HepG2 (cell line): ENCODE measurements at regions of chr17 and their contacts with region 1.

Region 1: GRCh38 chr17:72120642-72121163 is at the start of gene SOX9:
- DNase-seq: peak; percentile 98
- ATAC-seq: peak; percentile 90
- H3K4me3 ChIP-seq: peak within 1 kb of the TSS; percentile 86 to 100 (median 99)
- H3K27ac ChIP-seq: peak within 1 kb of the TSS; percentile 79
- H3K4me1 ChIP-seq: peaks cover 45% of the 10 kb centered on the region
- H3K27me3 ChIP-seq: no peaks in the 10 kb centered on the region; a peak in 1 of 5 replicates
- CTCF ChIP-seq: no peak
- EP300 ChIP-seq: no peak
- POLR2A ChIP-seq: peak; percentile 96 to 99
- RAD21 ChIP-seq: no peak; the same call in none of the 2 replicates
- total RNA-seq, gene SOX9: 27.6 and 40.1 TPM in 2 replicates

Region 2: GRCh38 chr17:71472809-71473789 is 647.6 kb before region 1 on chr17:
- CTCF ChIA-PET with region 1: interaction called, 15 read pairs
- POLR2A ChIA-PET with region 1: interaction called, 17 read pairs
- in situ Hi-C with region 1: loop called (anchors 5 kb)
- intact Hi-C with region 1: loop called (anchors 1 kb)
- DNase-seq: peak; percentile 65
- ATAC-seq: peak; percentile 93
- H3K4me3 ChIP-seq: no peak overlapping the region
- H3K27ac ChIP-seq: no peak overlapping the region
- H3K4me1 ChIP-seq: no peaks in the 10 kb centered on the region
- H3K27me3 ChIP-seq: no peaks in the 10 kb centered on the region
- CTCF ChIP-seq: peak; percentile 80
- EP300 ChIP-seq: no peak
- POLR2A ChIP-seq: no peak
- RAD21 ChIP-seq: peak; percentile 80

Region 3: GRCh38 chr17:72092710-72093322 is 27.9 kb before region 1 on chr17:
- CTCF ChIA-PET with region 1: interaction called, 4 read pairs
- POLR2A ChIA-PET with region 1: interaction called, 43 read pairs
- in situ Hi-C with region 1: no loop called
- intact Hi-C with region 1: loop called (anchors 1 kb)
- DNase-seq: peak; percentile 98
- ATAC-seq: peak; percentile 96
- H3K4me3 ChIP-seq: no peak overlapping the region
- H3K27ac ChIP-seq: peak overlapping the region; percentile 61
- H3K4me1 ChIP-seq: peaks cover 33% of the 10 kb centered on the region
- H3K27me3 ChIP-seq: no peaks in the 10 kb centered on the region
- CTCF ChIP-seq: peak; percentile 74
- EP300 ChIP-seq: peak; percentile 88 to 97; a peak in 3 of 4 replicates
- POLR2A ChIP-seq: no peak
- RAD21 ChIP-seq: peak; percentile 61; the same call in 1 of the 2 replicates

Region 4: DNA sequence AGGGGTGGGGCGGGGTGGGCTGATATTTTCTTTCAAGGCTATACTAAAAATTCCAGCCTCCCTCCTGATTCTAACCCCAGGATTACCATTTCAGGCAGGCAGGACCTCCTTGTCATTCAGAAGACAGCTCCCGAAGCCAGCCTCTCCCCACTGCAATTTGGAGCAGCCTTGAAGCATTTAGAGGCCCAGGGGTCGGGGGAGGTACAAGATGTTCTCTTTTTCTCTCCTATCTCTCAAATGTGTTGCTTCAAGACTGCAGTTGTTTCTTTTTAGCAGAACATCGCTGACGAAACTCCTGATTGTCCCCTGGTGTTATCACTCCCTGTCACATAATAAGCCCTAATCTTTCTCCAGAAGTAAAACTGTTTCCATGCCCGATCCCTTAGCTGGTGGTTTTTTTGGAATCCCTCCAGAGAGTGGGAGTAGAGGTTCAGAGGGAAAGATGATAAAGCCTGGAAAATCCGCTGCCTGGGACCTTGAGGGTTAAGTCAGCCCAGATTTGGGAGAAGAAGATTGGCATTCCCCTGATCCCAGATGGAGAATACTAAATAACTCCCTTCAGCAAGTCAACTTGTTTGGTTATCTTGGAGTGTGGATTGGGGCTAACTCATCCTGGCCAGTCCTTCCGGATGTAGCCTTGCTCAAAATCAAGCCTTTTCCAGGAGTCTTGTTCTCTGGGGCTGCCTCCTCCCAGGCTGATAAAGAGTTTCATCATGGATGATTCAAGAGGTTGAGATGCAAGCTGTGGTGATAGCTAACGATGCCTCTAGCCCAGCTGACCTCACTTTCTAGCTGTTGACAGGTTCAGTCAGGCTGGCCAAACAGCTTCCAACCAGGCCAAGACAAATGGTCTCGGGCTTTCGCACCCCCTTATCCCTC is 71.5 kb after region 1 on chr17:
- CTCF ChIA-PET with region 1: no interaction called
- POLR2A ChIA-PET with region 1: no interaction called
- in situ Hi-C with region 1: no loop called
- intact Hi-C with region 1: no loop called
- DNase-seq: no peak
- ATAC-seq: no peak
- H3K4me3 ChIP-seq: no peak overlapping the region
- H3K27ac ChIP-seq: no peak overlapping the region
- H3K4me1 ChIP-seq: no peaks in the 10 kb centered on the region
- H3K27me3 ChIP-seq: peaks cover 0 to 14% of the 10 kb centered on the region in 2 experiments; a peak in 3 of 5 replicates
- CTCF ChIP-seq: no peak
- EP300 ChIP-seq: no peak
- POLR2A ChIP-seq: no peak
- RAD21 ChIP-seq: no peak

Region 5: DNA sequence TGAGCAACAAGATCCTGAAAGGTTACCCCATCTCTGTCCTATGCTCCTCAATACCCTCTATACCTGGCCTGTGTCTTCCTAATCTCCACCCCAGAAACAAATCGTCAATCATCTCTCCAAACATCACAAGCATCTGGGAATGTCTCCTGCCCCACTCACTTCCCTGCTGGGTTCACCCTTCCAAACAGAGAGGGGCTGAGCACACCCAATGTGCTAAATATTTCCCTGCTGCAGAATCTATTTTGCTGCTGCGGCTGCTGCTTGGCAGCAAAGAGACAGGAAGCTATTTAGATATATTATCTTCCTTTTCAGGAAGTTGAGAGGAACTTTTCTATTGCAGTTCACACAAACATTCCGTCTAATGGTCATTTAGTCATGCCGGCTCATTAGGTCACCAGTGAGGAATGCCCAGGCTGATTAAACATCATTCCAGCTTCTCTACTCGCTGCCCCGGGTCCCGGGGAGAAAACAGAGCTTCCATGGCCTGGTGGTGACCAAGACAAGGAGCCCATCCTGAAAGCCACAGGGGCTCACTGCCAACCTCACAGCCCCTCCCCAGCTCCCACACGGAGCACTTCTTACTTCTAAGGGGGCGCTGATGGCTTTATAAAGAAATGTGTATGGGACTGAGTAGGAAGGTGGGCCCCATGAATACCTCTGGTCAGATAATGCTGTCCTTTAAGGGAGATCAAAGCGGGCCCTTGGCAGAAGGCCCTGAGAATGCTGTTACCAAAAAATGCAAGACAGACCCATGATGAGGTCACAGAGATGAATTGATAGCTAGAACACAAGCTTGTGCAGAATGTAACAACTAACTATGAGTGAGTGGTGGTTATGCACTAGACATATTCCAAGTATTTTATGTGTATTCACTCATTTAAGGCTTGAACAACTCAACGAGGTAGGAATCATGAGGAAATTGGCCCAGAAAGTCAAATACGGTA is 218.4 kb after region 1 on chr17:
- CTCF ChIA-PET with region 1: no interaction called
- POLR2A ChIA-PET with region 1: interaction called, 53 read pairs
- in situ Hi-C with region 1: no loop called
- intact Hi-C with region 1: loop called (anchors 1 kb)
- DNase-seq: peak; percentile 97
- ATAC-seq: peak; percentile 93
- H3K4me3 ChIP-seq: peak overlapping the region in 1 of 3 experiments; percentile 40; a peak in 2 of 6 replicates
- H3K27ac ChIP-seq: peak overlapping the region; percentile 81
- H3K4me1 ChIP-seq: peaks cover 55% of the 10 kb centered on the region
- H3K27me3 ChIP-seq: no peaks in the 10 kb centered on the region
- CTCF ChIP-seq: no peak
- EP300 ChIP-seq: peak; percentile 58 to 79
- POLR2A ChIP-seq: peak; percentile 17 to 30; a peak in 1 of 4 replicates
- RAD21 ChIP-seq: no peak

Region 6: DNA sequence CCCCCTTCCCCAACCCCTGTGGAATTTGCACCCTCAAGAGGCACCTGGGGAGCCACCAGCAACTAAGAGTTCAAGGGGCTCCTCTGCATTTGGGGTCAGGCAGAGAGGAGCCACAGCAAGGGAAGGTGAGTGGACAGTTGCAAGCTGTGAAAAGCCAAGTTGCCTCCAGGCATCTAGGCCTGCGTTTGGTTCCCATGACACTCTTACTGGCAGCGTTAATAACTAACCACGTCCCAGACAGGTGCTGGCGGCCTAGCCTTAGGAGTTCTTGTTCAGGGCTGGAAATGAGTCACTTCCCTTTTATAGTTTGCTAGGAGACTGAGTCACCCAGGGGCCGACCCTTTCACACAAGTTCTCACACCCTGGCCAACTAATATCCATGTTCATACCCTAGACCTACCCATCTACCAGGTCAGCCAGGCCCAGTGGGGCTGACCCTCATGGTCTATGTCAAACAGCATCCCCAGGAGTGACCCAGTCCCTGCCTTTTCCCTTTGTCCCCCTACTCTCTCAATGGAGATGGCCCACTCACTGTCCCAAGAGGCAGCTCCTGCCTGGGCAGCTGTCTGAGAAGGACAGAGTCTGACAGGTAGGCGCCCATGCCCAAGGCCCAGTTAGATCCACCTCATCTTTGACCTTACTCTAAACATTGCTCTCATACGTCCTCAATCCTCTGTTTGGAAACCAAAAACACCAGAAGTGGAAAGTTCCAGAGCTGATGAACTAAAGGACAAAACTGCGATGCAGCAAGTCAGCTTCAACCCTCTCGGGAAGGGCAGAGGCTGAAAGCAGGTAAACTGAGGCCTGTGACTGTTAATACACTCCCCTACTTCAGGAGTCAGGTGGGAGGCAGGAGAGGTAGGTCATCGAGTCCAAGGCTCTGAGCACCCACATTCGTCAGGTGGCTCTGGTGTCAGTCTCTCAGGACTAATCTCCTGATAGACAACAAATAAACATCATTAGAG is 300.7 kb after region 1 on chr17:
- CTCF ChIA-PET with region 1: no interaction called
- POLR2A ChIA-PET with region 1: interaction called, 62 read pairs
- in situ Hi-C with region 1: no loop called
- intact Hi-C with region 1: no loop called
- DNase-seq: peak; percentile 99
- ATAC-seq: peak; percentile 91
- H3K4me3 ChIP-seq: peak overlapping the region in 1 of 3 experiments; percentile 31; a peak in 2 of 6 replicates
- H3K27ac ChIP-seq: peak overlapping the region; percentile 83
- H3K4me1 ChIP-seq: peaks cover 86% of the 10 kb centered on the region
- H3K27me3 ChIP-seq: no peaks in the 10 kb centered on the region
- CTCF ChIP-seq: no peak
- EP300 ChIP-seq: peak in 1 of 2 experiments; percentile 92; a peak in 3 of 4 replicates
- POLR2A ChIP-seq: peak; percentile 48 to 68
- RAD21 ChIP-seq: peak; percentile 34

Region 7: GRCh38 chr17:72502371-72503341 is 382.0 kb after region 1 on chr17:
- CTCF ChIA-PET with region 1: no interaction called
- POLR2A ChIA-PET with region 1: interaction called, 29 read pairs
- in situ Hi-C with region 1: no loop called
- intact Hi-C with region 1: loop called (anchors 1 kb)
- DNase-seq: peak; percentile 93
- ATAC-seq: peak; percentile 82
- H3K4me3 ChIP-seq: peak overlapping the region; percentile 60 to 78 (median 60)
- H3K27ac ChIP-seq: peak overlapping the region; percentile 78
- H3K4me1 ChIP-seq: peaks cover 58% of the 10 kb centered on the region
- H3K27me3 ChIP-seq: no peaks in the 10 kb centered on the region
- CTCF ChIP-seq: 0 out of 2 replicates have a peak, but pooled peaks have one; percentile 1
- EP300 ChIP-seq: peak in 1 of 2 experiments; percentile 91; a peak in 2 of 4 replicates
- POLR2A ChIP-seq: no peak
- RAD21 ChIP-seq: no peak